WTC11 (cell line): ENCODE measurements at regions of chr15 and their contacts with region 1.

Region 1: GRCh38 chr15:70826634-70827033 is 27.3 kb downstream of the LARP6 start:
- DNase-seq: no peak
- ATAC-seq: no peak
- H3K4me3 Mint-ChIP-seq: no peak overlapping the region
- H3K27ac Mint-ChIP-seq: no peak overlapping the region
- H3K4me1 Mint-ChIP-seq: peaks cover 16% of the 10 kb centered on the region
- H3K27me3 Mint-ChIP-seq: no peaks in the 10 kb centered on the region
- CTCF ChIP-seq: no peak

Region 2: DNA sequence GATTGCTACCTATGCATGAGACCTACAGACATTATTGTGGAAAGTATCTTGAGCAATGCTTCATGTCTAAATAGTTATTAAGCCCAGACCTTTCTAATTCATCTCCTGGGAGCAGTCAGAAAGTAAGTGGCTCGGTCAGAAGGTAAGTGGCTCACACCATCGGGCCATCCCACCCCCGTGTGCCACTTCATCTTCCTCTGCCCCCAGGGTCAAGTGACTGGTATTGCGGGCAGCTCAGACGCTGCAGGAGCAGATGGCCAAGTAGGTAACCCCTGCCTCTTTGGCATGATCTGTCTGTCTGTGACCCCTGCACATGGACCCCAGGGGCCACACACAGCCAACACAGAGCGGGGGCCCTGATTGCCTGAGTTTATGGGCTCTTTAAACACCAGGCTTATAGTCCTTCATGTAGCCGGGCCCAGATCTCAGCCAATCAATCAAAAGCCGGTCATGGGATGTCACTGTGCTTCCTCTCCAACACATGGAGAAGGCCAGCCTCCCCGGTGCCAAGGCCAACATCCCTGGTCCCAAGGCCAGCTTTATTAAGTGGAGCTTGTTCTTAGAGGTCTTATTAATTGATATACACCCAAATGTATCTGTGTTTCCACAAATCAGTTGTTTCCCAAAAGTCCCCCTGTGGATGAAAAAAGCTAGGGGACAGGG is 15.6 kb before region 1 on chr15:
- CTCF ChIA-PET with region 1: interaction called, 33 read pairs
- POLR2A ChIA-PET with region 1: no interaction called
- DNase-seq: no peak
- ATAC-seq: peak; percentile 56
- H3K4me3 Mint-ChIP-seq: no peak overlapping the region
- H3K27ac Mint-ChIP-seq: no peak overlapping the region
- H3K4me1 Mint-ChIP-seq: peaks cover 9% of the 10 kb centered on the region
- H3K27me3 Mint-ChIP-seq: no peaks in the 10 kb centered on the region; the same call in 1 of the 2 replicates
- CTCF ChIP-seq: no peak

Region 3: GRCh38 chr15:70853821-70854666 is 27.4 kb after region 1 on chr15 and contains the start of gene LARP6:
- CTCF ChIA-PET with region 1: interaction called, 16 read pairs
- POLR2A ChIA-PET with region 1: interaction called, 4 read pairs
- DNase-seq: peak; percentile 70
- ATAC-seq: peak; percentile 78
- H3K4me3 Mint-ChIP-seq: peak within 1 kb of the TSS; percentile 85
- H3K27ac Mint-ChIP-seq: peak within 1 kb of the TSS; percentile 49; the same call in 1 of the 2 replicates
- H3K4me1 Mint-ChIP-seq: peaks cover 8% of the 10 kb centered on the region
- H3K27me3 Mint-ChIP-seq: peaks cover 29% of the 10 kb centered on the region
- CTCF ChIP-seq: no peak
- total RNA-seq, gene LARP6: 14.7 to 17.5 TPM (median 15.2 TPM) in 3 replicates

Region 4: GRCh38 chr15:70875001-70875782 is 48.6 kb after region 1 on chr15:
- CTCF ChIA-PET with region 1: interaction called, 30 read pairs
- POLR2A ChIA-PET with region 1: no interaction called
- DNase-seq: no peak
- ATAC-seq: no peak
- H3K4me3 Mint-ChIP-seq: no peak overlapping the region
- H3K27ac Mint-ChIP-seq: no peak overlapping the region
- H3K4me1 Mint-ChIP-seq: no peaks in the 10 kb centered on the region
- H3K27me3 Mint-ChIP-seq: no peaks in the 10 kb centered on the region
- CTCF ChIP-seq: no peak

Region 5: GRCh38 chr15:71024657-71025056 is 198.0 kb after region 1 on chr15:
- CTCF ChIA-PET with region 1: no interaction called
- POLR2A ChIA-PET with region 1: no interaction called
- DNase-seq: no peak
- ATAC-seq: no peak
- H3K4me3 Mint-ChIP-seq: no peak overlapping the region
- H3K27ac Mint-ChIP-seq: no peak overlapping the region
- H3K4me1 Mint-ChIP-seq: no peaks in the 10 kb centered on the region
- H3K27me3 Mint-ChIP-seq: peaks cover 3% of the 10 kb centered on the region; the same call in 1 of the 2 replicates
- CTCF ChIP-seq: no peak